ENCODE measurements at regions of chr3 and their contacts with region 1.

Region 1: GRCh38 chr3:168213920-168214319 is 118.2 kb upstream of the GOLIM4 start:
- DNase-seq: no peak
- ATAC-seq: no peak

Region 2: DNA sequence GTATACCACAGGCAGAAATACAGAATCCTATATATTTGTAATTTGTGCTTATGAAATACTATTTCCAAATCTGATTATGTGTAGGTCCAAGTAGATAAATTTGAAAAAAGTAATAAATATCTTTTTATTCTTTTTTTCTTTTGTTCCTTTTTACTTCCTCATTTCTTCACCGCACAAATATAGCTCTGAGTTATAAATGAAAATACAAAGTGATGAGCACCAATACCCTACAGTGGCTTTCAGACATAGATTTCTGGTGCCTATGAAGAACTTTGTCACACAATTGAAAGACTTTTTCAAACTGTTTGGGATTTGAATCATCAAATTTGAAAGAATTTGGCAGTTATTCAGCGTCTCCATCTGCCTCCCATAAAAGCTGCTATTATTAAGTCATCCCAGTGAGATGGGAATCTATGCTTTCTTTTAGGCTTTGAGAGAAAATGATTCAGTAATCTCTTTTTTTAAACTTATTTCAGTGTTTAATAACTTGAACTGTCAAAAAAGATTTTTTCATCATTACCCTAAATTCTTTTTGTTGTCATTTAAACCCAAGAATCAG is 245.4 kb after region 1 on chr3:
- intact Hi-C with region 1: loop called in 1 of 2 experiments (anchors 5 kb)
- DNase-seq: no peak
- ATAC-seq: no peak

Region 3: GRCh38 chr3:168467115-168467714 is 253.3 kb after region 1 on chr3:
- intact Hi-C with region 1: loop called (anchors 2 to 5 kb)
- DNase-seq: no peak
- ATAC-seq: peak; percentile 82 to 87

Region 4: GRCh38 chr3:168847291-168847883 is 633.5 kb after region 1 on chr3:
- intact Hi-C with region 1: loop called (anchors 2 to 5 kb)
- DNase-seq: no peak
- ATAC-seq: peak in 1 of 2 donors; percentile 59

Measured in left cardiac atrium (tissue), 4 donors.